Sigmoid colon (tissue), 7 donors: ENCODE measurements at regions of chr5 and their contacts with region 1.

Region 1: GRCh38 chr5:131796793-131797693 is at the start of gene FNIP1:
- DNase-seq: peak; percentile 100
- H3K4me3 ChIP-seq: peak within 1 kb of the TSS; percentile 77 to 100 (median 98)
- H3K27ac ChIP-seq: peak within 1 kb of the TSS; percentile 95 to 100 (median 100)
- H3K4me1 ChIP-seq: peaks cover 0 to 40% (median 23%) of the 10 kb centered on the region in 4 donors
- H3K27me3 ChIP-seq: no peaks in the 10 kb centered on the region
- CTCF ChIP-seq: no peak
- EP300 ChIP-seq: peak in 3 of 4 donors; percentile 39 to 78 (median 56)
- POLR2A ChIP-seq: peak; percentile 91 to 96
- total RNA-seq, gene FNIP1: 46.4 to 74.4 (median 56.5) TPM

Region 2: GRCh38 chr5:131165119-131165727 is 631.8 kb before region 1 on chr5 and contains the start of gene HINT1:
- intact Hi-C with region 1: loop called (anchors 10 kb)
- DNase-seq: peak; percentile 94
- H3K4me3 ChIP-seq: peak within 1 kb of the TSS; percentile 64 to 82 (median 71)
- H3K27ac ChIP-seq: peak within 1 kb of the TSS; percentile 93 to 94 (median 94)
- H3K4me1 ChIP-seq: peaks cover 0 to 30% (median 20%) of the 10 kb centered on the region in 4 donors
- H3K27me3 ChIP-seq: no peaks in the 10 kb centered on the region
- CTCF ChIP-seq: no peak
- EP300 ChIP-seq: no peak
- POLR2A ChIP-seq: peak; percentile 81 to 82
- total RNA-seq, gene HINT1: 135 to 261 (median 251) TPM

Region 3: GRCh38 chr5:131263648-131264450 is 533.2 kb before region 1 on chr5 and contains the start of gene CDC42SE2:
- intact Hi-C with region 1: loop called (anchors 5 kb)
- DNase-seq: peak; percentile 89
- H3K4me3 ChIP-seq: peak within 1 kb of the TSS; percentile 72 to 98 (median 85)
- H3K27ac ChIP-seq: peak within 1 kb of the TSS; percentile 84 to 92 (median 89)
- H3K4me1 ChIP-seq: peaks cover 0 to 24% (median 15%) of the 10 kb centered on the region in 4 donors
- H3K27me3 ChIP-seq: no peaks in the 10 kb centered on the region
- CTCF ChIP-seq: no peak
- EP300 ChIP-seq: no peak
- POLR2A ChIP-seq: peak; percentile 68 to 73
- total RNA-seq, gene CDC42SE2: 24.1 to 33.2 (median 28.6) TPM

Region 4: GRCh38 chr5:131634996-131635754 is 161.9 kb before region 1 on chr5 and contains the start of gene RAPGEF6:
- intact Hi-C with region 1: loop called (anchors 1 kb)
- DNase-seq: peak; percentile 100
- H3K4me3 ChIP-seq: peak within 1 kb of the TSS; percentile 64 to 84 (median 66)
- H3K27ac ChIP-seq: peak within 1 kb of the TSS; percentile 92 to 100 (median 99)
- H3K4me1 ChIP-seq: peaks cover 2 to 48% (median 35%) of the 10 kb centered on the region in 4 donors
- H3K27me3 ChIP-seq: no peaks in the 10 kb centered on the region
- CTCF ChIP-seq: peak in 1 of 4 experiments; percentile 12
- EP300 ChIP-seq: peak in 1 of 4 donors; percentile 87
- POLR2A ChIP-seq: peak; percentile 70 to 80
- total RNA-seq, gene RAPGEF6: 16.1 to 30.5 (median 18.6) TPM

Region 5: GRCh38 chr5:131671994-131672655 is 124.9 kb before region 1 on chr5:
- intact Hi-C with region 1: loop called (anchors 2 kb)
- DNase-seq: no peak
- H3K4me3 ChIP-seq: no peak overlapping the region
- H3K27ac ChIP-seq: peak overlapping the region; percentile 76 to 90 (median 86)
- H3K4me1 ChIP-seq: peaks cover 0 to 70% (median 54%) of the 10 kb centered on the region in 4 donors
- H3K27me3 ChIP-seq: no peaks in the 10 kb centered on the region
- CTCF ChIP-seq: no peak
- EP300 ChIP-seq: peak; percentile 27 to 86 (median 81)
- POLR2A ChIP-seq: no peak

Region 6: DNA sequence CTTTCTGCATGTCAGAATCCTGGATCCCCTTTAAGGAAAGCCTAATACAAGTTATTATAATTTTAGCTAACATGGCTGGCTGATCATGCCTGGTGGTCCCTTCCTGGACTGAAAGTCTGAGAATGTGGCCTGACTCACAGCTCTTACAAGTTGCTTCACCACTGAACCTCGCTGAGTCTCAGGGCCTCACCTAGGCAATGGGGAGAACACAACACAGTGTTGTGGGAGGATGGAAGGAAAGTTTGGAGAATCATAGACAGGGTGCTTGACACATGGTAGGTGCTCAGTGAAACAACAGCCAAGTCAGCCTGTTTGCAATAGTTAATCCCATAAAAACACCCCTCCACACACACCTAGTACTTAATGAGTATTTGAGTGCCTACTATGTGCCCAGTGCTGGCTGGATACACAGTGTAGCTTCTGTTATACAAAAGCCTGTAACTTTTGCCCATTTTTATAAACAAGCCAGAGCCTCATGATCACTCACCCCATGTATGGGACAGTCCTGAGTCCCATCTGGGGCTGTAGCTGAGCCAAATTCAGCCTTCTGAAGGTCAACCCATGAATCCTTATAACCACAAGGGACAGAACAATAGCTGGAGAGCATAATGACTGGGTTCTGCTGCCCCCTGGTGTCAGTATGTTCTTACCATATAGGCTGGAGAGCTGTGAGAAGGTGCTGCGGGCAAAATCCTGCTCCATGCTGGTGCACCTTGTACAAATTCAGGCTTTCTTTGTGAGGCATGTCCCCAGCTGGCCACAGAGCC is 210.5 kb after region 1 on chr5:
- intact Hi-C with region 1: loop called (anchors 5 kb)
- DNase-seq: peak; percentile 81
- H3K4me3 ChIP-seq: no peak overlapping the region
- H3K27ac ChIP-seq: no peak overlapping the region
- H3K4me1 ChIP-seq: peaks cover 0 to 17% (median 15%) of the 10 kb centered on the region in 4 donors
- H3K27me3 ChIP-seq: peaks cover 3 to 17% (median 12%) of the 10 kb centered on the region in 3 donors
- CTCF ChIP-seq: peak; percentile 55 to 84 (median 73)
- EP300 ChIP-seq: no peak
- POLR2A ChIP-seq: no peak